ENCODE measurements at regions of chr10 and their contacts with region 1.

Region 1: DNA sequence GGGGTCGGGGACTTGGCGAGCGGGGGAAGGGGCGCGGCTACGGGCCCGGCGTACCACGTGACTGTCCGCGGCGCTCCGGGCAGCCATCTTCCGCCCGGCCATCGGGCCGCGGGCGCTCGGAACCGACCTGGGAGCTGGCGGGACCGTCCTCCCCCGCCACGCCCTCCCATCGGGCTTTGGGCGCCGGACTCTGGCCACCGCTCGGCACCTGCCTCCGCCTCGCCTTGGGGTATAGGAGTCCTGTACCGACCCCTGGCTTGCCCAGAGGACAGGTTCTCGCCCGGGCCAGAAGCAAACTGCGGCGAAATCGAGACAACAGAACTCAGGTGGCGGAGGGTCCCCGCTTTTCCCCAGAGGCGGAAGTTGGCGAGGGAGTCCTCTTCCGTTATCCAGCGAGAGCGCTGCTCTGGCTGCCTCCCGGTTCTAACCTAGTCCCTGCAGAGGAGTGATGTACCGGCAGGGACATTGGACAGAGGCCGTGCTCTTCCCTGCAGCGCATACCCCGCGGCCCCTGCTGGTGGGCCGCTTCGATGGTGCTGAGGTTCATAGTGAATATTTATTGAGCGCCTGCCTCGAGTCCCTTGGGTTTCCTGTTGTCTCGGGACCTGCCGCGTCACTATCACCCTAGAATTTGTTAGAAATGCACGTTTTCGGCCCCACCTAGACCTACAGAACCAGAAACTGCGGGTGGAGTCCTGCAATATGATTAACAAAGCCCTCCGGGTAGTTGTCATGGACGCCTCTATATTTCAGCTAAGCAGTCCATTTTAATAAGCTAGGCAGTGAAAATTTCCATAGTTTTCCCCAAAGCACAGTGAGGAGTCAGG is 1.3 kb upstream of the SGMS1 start:
- DNase-seq: peak; percentile 94

Region 2: DNA sequence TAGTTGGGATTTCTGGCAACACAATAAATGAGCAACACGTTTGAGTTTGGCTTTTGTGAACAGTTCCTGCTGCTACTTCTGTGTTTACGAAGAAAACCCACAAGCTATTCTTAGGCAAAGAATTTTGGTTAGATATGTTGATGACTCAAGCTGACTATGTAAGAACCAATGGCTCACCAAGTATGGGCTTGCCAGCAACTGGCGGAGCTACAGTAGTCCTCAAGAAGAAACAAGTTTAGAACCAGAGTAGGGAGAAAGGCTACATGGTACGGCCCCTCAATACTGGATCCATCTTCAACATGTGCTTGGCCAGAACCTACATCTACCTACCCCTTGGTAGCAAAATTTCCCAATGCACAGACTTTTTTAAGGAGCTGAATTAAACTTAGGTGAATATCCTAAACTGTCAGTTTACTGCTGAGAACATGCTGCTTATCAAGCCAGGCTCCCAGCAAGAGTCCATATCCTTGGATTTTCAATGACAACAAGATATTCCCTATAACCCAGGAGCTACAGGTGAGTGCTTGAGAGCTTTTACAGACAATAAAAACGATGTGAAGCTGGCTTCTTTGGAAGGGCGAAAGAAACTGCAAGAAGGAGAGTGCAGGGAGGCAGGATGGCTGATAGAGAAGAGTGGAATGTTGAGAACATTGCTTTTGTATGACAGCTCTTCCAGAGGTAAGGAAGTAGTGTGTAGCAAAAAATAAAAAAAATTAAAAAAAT is 299.5 kb before region 1 on chr10:
- intact Hi-C with region 1: loop called (anchors 2 kb)
- DNase-seq: no peak

Region 3: GRCh38 chr10:50417886-50418830 is 206.9 kb before region 1 on chr10:
- intact Hi-C with region 1: loop called (anchors 1 kb)
- DNase-seq: peak; percentile 87

Region 4: GRCh38 chr10:50558371-50558770 is 66.7 kb before region 1 on chr10:
- intact Hi-C with region 1: loop called (anchors 2 kb)
- DNase-seq: no peak

Region 5: DNA sequence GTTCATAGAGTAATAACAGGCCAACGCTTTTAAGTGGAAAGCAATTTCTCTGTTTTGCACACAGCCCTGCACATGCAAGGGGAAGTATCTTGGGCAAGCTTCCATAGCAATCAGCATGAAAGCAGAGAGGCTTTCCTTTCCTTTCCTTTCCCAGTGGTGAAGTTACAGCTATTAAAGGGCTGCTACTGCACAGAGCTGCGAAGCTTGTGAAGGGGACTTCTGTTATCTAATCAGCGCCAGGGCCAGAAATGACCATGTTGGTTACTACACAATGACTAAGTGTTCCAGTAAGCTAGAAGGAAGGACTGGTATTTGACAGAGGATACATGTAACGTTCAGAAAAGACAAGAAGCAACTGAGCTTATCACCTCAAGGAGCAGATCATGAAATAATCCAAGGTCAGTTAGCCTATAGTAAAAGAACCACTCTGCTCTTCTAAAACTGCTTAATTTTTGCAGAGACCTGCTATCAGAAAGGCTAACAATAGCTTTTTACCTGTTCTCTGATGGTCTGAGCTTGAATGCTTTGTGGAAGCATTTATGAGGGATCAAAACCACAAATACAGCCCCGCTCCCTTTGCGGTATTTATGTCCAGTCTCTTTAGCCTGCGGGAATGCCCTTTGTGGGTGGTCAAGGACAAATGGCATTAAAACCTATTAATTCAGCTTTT is 47.3 kb before region 1 on chr10:
- intact Hi-C with region 1: loop called (anchors 5 kb)
- DNase-seq: no peak

Region 6: GRCh38 chr10:51759896-51760534 is 1134.9 kb after region 1 on chr10:
- intact Hi-C with region 1: no loop called
- DNase-seq: no peak

Measured in cardiac septum (tissue), 1 donor.